HepG2 (cell line): ENCODE measurements at regions of chr9 and their contacts with region 1.

Region 1: DNA sequence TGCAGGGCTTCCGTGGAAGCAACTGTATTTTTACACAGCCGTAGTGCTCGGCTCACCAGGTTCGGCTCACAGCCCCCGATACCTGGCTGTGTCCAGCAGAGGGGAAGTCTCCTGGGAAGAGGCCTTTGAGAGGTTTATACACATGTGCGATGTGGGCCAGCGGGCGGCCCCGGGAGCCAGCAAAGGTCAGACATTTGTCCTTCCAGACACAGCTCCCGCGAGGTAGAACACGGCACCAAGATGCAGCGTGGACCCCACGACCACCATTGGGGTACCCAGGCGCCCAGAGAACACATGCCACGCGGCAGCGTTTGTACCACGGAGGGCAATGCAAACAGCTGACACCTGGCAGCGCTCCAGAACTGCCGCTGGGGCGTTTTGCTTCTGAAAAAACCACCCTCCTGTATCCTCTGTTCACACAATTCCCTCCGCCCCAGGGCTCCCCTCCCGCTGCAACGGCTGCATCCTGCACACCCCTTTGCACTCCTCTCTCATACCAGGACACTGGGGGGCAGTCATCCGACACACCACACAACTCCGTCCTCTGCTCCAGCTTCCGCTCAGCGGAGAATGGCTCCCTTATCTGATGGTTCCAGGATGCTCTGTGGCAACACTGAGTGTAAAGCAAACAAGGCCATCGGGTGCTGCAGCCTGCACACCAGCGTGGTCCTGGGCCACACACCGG is 235.3 kb downstream of the SYK start:
- DNase-seq: peak; percentile 98
- ATAC-seq: peak; percentile 97
- H3K4me3 ChIP-seq: peak overlapping the region in 2 of 3 experiments; percentile 18 to 60; a peak in 3 of 6 replicates
- H3K27ac ChIP-seq: peak overlapping the region; percentile 94
- H3K4me1 ChIP-seq: peaks cover 62% of the 10 kb centered on the region
- H3K27me3 ChIP-seq: no peaks in the 10 kb centered on the region
- CTCF ChIP-seq: peak; percentile 99
- EP300 ChIP-seq: peak; percentile 86 to 91
- POLR2A ChIP-seq: peak in 1 of 2 experiments; percentile 83; a peak in 2 of 4 replicates
- RAD21 ChIP-seq: peak; percentile 97

Region 2: DNA sequence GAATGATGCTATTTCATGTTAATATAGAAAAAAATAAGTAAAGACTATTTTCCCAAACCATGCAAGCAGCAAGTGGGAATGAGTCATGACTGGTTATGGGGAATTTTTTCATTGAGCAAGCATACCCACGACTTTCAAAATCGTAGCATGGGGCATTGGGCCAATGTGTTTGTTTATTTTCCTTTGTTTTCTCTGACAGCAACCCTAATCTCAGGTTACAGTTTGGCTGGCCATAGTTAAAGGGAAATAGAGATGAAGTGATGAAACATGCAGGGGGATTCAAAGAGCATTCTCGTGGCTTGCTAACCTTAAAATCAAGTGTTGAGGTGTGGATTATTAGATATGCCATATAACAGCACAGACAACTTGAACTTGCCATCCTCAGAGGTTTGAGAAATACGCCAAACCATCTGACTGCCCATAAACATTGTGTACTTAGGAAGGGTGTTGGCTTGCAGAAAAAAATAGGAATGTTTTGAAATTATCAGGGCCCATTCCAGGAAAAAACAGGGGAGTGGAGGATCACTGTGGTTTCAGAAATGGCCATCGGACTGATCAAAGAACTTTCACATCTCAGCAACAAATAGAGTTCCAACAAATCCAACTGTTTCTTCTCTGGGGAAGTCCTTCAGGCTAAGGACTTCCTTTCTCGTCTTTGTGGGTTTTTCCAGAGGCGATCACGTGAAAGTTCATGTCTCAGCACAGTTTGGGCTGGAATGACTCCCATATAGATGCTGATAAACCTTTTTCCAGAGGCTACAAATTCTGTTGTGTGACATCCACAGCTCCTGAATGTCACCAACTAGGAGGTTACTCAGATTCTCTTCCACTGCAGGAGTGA is 23.8 kb after region 1 on chr9:
- CTCF ChIA-PET with region 1: no interaction called
- POLR2A ChIA-PET with region 1: interaction called, 14 read pairs
- in situ Hi-C with region 1: no loop called
- intact Hi-C with region 1: no loop called
- DNase-seq: peak; percentile 94
- ATAC-seq: peak; percentile 91
- H3K4me3 ChIP-seq: peak overlapping the region in 1 of 3 experiments; percentile 25; a peak in 1 of 6 replicates
- H3K27ac ChIP-seq: peak overlapping the region; percentile 87
- H3K4me1 ChIP-seq: peaks cover 51% of the 10 kb centered on the region
- H3K27me3 ChIP-seq: no peaks in the 10 kb centered on the region
- CTCF ChIP-seq: no peak
- EP300 ChIP-seq: peak; percentile 85 to 89
- POLR2A ChIP-seq: no peak
- RAD21 ChIP-seq: no peak

Region 3: GRCh38 chr9:91071185-91071990 is 34.4 kb after region 1 on chr9:
- CTCF ChIA-PET with region 1: no interaction called
- POLR2A ChIA-PET with region 1: interaction called, 36 read pairs
- in situ Hi-C with region 1: no loop called
- intact Hi-C with region 1: loop called (anchors 2 kb)
- DNase-seq: peak; percentile 76
- ATAC-seq: peak; percentile 88
- H3K4me3 ChIP-seq: peak overlapping the region; percentile 33 to 66 (median 50)
- H3K27ac ChIP-seq: peak overlapping the region; percentile 71
- H3K4me1 ChIP-seq: peaks cover 62% of the 10 kb centered on the region
- H3K27me3 ChIP-seq: no peaks in the 10 kb centered on the region
- CTCF ChIP-seq: no peak; the same call in 1 of the 2 replicates
- EP300 ChIP-seq: peak in 1 of 2 experiments; percentile 50; a peak in 2 of 4 replicates
- POLR2A ChIP-seq: peak; percentile 18 to 61; a peak in 3 of 4 replicates
- RAD21 ChIP-seq: no peak

Region 4: GRCh38 chr9:91207729-91208418 is 170.9 kb after region 1 on chr9:
- CTCF ChIA-PET with region 1: no interaction called
- POLR2A ChIA-PET with region 1: interaction called, 21 read pairs
- in situ Hi-C with region 1: no loop called
- intact Hi-C with region 1: no loop called
- DNase-seq: peak; percentile 88
- ATAC-seq: peak; percentile 83
- H3K4me3 ChIP-seq: peak overlapping the region in 2 of 3 experiments; percentile 20 to 41; a peak in 3 of 6 replicates
- H3K27ac ChIP-seq: peak overlapping the region; percentile 91
- H3K4me1 ChIP-seq: peaks cover 83% of the 10 kb centered on the region
- H3K27me3 ChIP-seq: no peaks in the 10 kb centered on the region
- CTCF ChIP-seq: no peak
- EP300 ChIP-seq: peak; percentile 34 to 83; a peak in 2 of 4 replicates
- POLR2A ChIP-seq: 0 out of 4 replicates have a peak, but pooled peaks of 1 of the 2 experiments have one; percentile 18
- RAD21 ChIP-seq: no peak

Region 5: GRCh38 chr9:91361291-91362050 is 324.5 kb after region 1 on chr9 and contains the start of gene AUH:
- CTCF ChIA-PET with region 1: no interaction called
- POLR2A ChIA-PET with region 1: interaction called, 11 read pairs
- in situ Hi-C with region 1: no loop called
- intact Hi-C with region 1: no loop called
- DNase-seq: peak; percentile 60
- ATAC-seq: peak; percentile 92
- H3K4me3 ChIP-seq: peak within 1 kb of the TSS; percentile 95 to 99 (median 98)
- H3K27ac ChIP-seq: peak within 1 kb of the TSS; percentile 84
- H3K4me1 ChIP-seq: peaks cover 45% of the 10 kb centered on the region
- H3K27me3 ChIP-seq: no peaks in the 10 kb centered on the region; a peak in 1 of 5 replicates
- CTCF ChIP-seq: no peak
- EP300 ChIP-seq: no peak
- POLR2A ChIP-seq: peak; percentile 61 to 70
- RAD21 ChIP-seq: peak; percentile 46; the same call in 1 of the 2 replicates
- total RNA-seq, gene AUH: 31.9 and 35.7 TPM in 2 replicates

Region 6: GRCh38 chr9:91676046-91676445 is 639.1 kb after region 1 on chr9:
- CTCF ChIA-PET with region 1: no interaction called
- POLR2A ChIA-PET with region 1: no interaction called
- in situ Hi-C with region 1: no loop called
- intact Hi-C with region 1: loop called (anchors 5 kb)
- DNase-seq: peak; percentile 15
- ATAC-seq: peak; percentile 88
- H3K4me3 ChIP-seq: no peak overlapping the region
- H3K27ac ChIP-seq: no peak overlapping the region
- H3K4me1 ChIP-seq: no peaks in the 10 kb centered on the region
- H3K27me3 ChIP-seq: no peaks in the 10 kb centered on the region; a peak in 2 of 5 replicates
- CTCF ChIP-seq: peak; percentile 72
- EP300 ChIP-seq: no peak
- POLR2A ChIP-seq: no peak
- RAD21 ChIP-seq: no peak